ENCODE measurements at regions of chr11 and their contacts with region 1.

Region 1: GRCh38 chr11:7571640-7572000 is 57.8 kb downstream of the PPFIBP2 start:
- DNase-seq: peak; percentile 78
- H3K4me3 ChIP-seq: no peak overlapping the region
- H3K27ac ChIP-seq: no peak overlapping the region
- H3K4me1 ChIP-seq: peaks cover 6% of the 10 kb centered on the region
- H3K27me3 ChIP-seq: peaks cover 32 to 37% of the 10 kb centered on the region in 2 experiments
- CTCF ChIP-seq: peak; percentile 90 to 96
- POLR2A ChIP-seq: no peak

Region 2: DNA sequence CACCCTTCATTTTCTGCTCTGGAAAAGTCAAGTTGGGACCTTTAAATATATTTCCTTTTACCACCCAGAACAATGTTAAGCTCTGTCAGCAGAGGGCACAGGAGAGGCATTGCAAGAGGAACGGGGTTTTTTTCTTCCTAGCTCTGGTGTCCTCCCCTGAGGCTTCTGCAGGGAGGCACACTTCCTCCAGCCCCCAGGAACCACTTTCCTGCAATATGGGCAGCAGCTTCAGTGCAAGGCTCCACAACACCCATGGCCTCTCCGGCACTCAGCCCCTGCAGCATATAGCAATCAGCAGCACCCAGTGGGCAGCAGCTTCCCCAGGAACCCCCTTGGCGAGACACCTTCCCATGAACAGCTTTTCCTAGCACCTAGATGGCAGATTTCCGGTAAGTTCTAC is 218.5 kb before region 1 on chr11:
- CTCF ChIA-PET with region 1: interaction called, 10 read pairs
- POLR2A ChIA-PET with region 1: no interaction called
- dilution Hi-C with region 1: no loop called
- intact Hi-C with region 1: no loop called
- DNase-seq: peak; percentile 24
- H3K4me3 ChIP-seq: no peak overlapping the region
- H3K27ac ChIP-seq: no peak overlapping the region
- H3K4me1 ChIP-seq: no peaks in the 10 kb centered on the region
- H3K27me3 ChIP-seq: peaks cover 0 to 5% of the 10 kb centered on the region in 2 experiments
- CTCF ChIP-seq: peak; percentile 21 to 37
- POLR2A ChIP-seq: no peak

Region 3: DNA sequence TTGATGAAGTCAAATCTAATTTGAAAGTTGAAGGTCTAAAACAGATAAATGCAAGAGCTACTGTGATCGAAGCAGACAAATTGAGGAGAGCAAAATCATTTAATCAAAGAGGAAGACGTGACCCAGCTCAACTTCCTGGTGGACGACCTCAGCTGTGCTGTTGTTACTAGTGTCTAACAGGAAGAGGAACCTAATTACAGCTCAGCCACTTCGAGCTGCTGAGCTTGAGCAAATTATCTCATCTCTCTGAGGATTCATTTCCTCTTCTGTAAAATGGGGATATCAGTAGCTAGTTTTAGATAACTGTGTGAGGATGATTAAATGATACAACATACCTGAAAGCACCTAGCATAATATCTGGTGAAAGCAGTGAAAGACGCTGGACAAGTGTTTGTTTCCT is 135.0 kb before region 1 on chr11:
- CTCF ChIA-PET with region 1: no interaction called
- POLR2A ChIA-PET with region 1: no interaction called
- dilution Hi-C with region 1: no loop called
- intact Hi-C with region 1: no loop called
- DNase-seq: peak; percentile 25
- H3K4me3 ChIP-seq: no peak overlapping the region
- H3K27ac ChIP-seq: no peak overlapping the region
- H3K4me1 ChIP-seq: peaks cover 10% of the 10 kb centered on the region
- H3K27me3 ChIP-seq: peaks cover 0 to 7% of the 10 kb centered on the region in 2 experiments
- CTCF ChIP-seq: no peak
- POLR2A ChIP-seq: no peak

Region 4: GRCh38 chr11:7592711-7593110 is 21.1 kb after region 1 on chr11:
- CTCF ChIA-PET with region 1: interaction called, 16 read pairs
- POLR2A ChIA-PET with region 1: no interaction called
- dilution Hi-C with region 1: no loop called
- intact Hi-C with region 1: no loop called
- DNase-seq: no peak
- H3K4me3 ChIP-seq: no peak overlapping the region
- H3K27ac ChIP-seq: no peak overlapping the region
- H3K4me1 ChIP-seq: no peaks in the 10 kb centered on the region
- H3K27me3 ChIP-seq: peaks cover 3 to 15% of the 10 kb centered on the region in 2 experiments
- CTCF ChIP-seq: no peak
- POLR2A ChIP-seq: no peak

Region 5: GRCh38 chr11:7630002-7630401 is 58.4 kb after region 1 on chr11:
- CTCF ChIA-PET with region 1: interaction called, 31 read pairs
- POLR2A ChIA-PET with region 1: no interaction called
- dilution Hi-C with region 1: no loop called
- intact Hi-C with region 1: no loop called
- DNase-seq: peak; percentile 94
- H3K4me3 ChIP-seq: no peak overlapping the region
- H3K27ac ChIP-seq: no peak overlapping the region
- H3K4me1 ChIP-seq: peaks cover 5% of the 10 kb centered on the region
- H3K27me3 ChIP-seq: no peaks in the 10 kb centered on the region
- CTCF ChIP-seq: no peak
- POLR2A ChIP-seq: peak; percentile 35

Region 6: DNA sequence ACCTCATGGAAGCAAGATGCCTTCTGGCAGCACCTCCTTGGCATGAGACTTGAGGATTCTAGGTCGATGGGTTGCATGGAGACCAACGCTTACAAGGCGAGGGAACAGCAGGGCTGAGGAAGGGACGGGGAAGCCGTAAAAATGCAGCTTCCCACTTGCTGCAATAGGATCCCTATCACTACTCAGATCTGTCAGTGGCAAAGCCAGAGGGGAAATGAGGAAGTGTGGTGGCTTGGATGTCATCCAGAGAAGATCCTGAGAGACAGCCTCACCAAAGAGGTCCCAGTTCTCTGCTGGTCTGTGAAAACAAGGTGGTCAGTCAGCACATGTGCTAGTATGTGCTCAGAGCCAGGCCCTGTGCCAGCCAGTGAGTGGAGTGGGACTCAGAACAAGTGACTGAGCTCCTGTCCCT is 79.5 kb after region 1 on chr11:
- CTCF ChIA-PET with region 1: interaction called, 766 read pairs
- POLR2A ChIA-PET with region 1: no interaction called
- dilution Hi-C with region 1: no loop called
- intact Hi-C with region 1: no loop called
- DNase-seq: no peak
- H3K4me3 ChIP-seq: no peak overlapping the region
- H3K27ac ChIP-seq: no peak overlapping the region
- H3K4me1 ChIP-seq: no peaks in the 10 kb centered on the region
- H3K27me3 ChIP-seq: no peaks in the 10 kb centered on the region
- CTCF ChIP-seq: no peak
- POLR2A ChIP-seq: no peak

Region 7: DNA sequence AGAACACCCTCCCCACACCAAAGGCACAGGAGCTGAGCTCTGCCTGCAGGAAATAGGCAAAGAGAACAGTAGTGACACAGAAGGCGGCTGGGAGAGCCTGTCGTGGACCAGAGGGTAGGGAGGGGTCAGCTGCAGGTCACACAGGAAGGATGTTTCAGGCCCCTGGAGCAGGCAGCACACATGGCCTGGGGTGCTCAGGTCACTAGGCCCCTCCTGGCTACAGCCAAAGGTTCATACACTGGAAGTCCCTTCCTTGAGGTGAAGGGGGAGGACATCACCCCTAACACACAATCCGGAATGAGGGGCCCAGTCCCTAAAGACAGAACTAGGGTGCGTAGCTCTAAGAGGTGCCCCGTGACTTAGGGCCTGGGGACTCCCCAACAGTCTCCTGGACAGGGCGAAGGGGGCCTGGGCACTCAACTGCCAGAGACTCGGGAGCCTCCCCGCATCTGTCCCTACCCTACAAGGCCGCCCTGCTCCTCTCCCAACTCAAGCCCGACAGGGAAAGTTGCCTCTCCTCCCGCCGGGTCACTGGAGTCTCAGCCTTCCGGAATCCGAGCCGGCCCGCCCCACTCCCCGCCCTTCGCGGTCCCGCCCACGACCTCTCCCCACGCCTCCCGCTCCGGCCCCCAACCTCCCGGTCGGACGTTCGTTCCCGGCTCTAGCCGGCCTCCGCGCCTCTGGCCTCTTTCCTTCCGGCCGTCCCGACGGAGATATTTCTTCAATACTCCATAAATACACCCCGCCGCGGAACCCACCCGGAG is 101.5 kb after region 1 on chr11 and contains the start of gene CYB5R2:
- CTCF ChIA-PET with region 1: interaction called, 225 read pairs
- POLR2A ChIA-PET with region 1: no interaction called
- dilution Hi-C with region 1: no loop called
- intact Hi-C with region 1: no loop called
- DNase-seq: peak; percentile 15
- H3K4me3 ChIP-seq: peak within 1 kb of the TSS; percentile 25 to 44 (median 32)
- H3K27ac ChIP-seq: no peak within 1 kb of the TSS
- H3K4me1 ChIP-seq: peaks cover 4% of the 10 kb centered on the region
- H3K27me3 ChIP-seq: peaks cover 0 to 4% of the 10 kb centered on the region in 2 experiments
- CTCF ChIP-seq: no peak
- POLR2A ChIP-seq: no peak
- total RNA-seq, gene CYB5R2: 4.2 and 4.8 TPM in 2 replicates

Measured in endothelial cell of umbilical vein (primary cell).